SK-N-SH (cell line): ENCODE measurements at regions of chr1 and their contacts with region 1.

Region 1: DNA sequence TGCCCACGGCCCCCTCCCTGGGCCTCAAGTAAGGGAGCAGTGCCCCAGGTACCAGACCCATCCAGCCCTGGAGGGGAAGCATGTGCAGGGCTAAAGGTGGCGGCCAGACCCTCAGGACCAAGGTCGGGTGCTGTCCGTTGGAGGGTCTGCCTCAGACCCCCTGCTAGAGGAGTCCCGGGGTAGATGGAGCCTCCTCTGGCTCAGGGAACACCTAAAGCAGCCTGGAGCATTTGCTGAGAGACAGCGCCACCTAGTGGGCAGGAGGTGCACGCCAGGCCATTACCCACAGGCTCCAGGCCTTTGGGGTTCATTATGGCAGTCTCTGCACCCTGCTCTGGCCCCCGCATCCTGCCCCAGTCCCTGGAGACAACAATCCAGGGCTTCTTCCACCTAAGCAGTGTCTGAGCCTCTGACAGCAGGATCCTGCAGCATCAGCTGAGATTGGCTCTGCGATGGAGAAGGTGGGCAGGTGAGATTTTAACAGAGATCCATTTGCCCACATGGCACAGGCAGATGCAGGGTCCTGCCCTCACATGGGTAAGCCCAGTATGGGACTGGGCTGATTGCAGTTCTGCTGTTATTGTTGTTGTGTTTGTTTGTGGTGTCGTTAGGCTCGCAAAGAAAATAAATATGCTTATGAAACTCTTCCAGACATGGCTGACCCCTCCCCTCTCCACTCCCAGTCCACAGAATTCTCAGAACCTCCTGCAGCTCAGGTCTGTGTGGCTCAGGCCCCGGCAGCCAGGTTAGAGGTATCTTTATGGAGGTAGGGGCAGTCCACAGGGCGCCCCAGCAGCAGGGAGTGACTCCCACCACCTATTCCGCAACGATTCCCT is 42.4 kb downstream of the CTNNBIP1 start:
- DNase-seq: peak; percentile 91
- H3K4me3 ChIP-seq: no peak overlapping the region
- H3K27ac ChIP-seq: no peak overlapping the region
- H3K4me1 ChIP-seq: peaks cover 0 to 4% of the 10 kb centered on the region in 2 experiments; a peak in 1 of 4 replicates
- H3K27me3 ChIP-seq: no peaks in the 10 kb centered on the region
- CTCF ChIP-seq: peak; percentile 94
- EP300 ChIP-seq: no peak
- RAD21 ChIP-seq: peak; percentile 97

Region 2: DNA sequence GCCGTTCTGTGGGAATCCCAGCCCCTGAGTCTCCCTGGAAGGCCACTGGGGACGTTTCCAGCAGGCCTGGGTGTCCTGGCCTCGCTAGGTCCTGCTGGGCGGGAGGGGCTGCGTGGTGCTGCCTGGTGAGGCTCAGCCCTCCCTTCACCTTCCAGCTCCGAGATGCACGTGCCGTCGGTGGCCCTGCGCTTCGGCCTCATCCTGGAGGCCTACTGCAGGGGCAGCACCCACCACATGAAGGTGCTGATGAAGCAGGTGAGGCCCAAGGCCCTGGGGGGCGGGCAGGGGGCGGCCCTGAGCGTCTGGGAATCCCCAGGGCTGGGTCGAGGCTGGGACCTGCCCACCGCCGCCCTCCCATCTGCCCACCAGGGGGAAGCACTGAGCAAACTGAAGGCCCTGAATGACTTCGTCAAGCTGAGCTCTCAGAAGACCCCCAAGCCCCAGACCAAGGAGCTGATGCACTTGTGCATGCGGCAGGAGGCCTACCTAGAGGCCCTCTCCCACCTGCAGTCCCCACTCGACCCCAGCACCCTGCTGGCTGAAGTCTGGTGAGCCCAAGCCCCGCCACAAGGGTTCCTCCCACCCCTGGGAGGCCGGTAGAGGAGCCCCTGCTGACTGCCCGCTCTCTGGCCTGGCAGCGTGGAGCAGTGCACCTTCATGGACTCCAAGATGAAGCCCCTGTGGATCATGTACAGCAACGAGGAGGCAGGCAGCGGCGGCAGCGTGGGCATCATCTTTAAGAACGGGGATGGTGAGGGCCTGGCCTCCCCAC is 145.8 kb before region 1 on chr1:
- CTCF ChIA-PET with region 1: interaction called, 13 read pairs
- POLR2A ChIA-PET with region 1: no interaction called
- DNase-seq: peak; percentile 87
- H3K4me3 ChIP-seq: no peak overlapping the region; a peak in 1 of 4 replicates
- H3K27ac ChIP-seq: no peak overlapping the region
- H3K4me1 ChIP-seq: peaks cover 2 to 9% of the 10 kb centered on the region in 2 experiments; a peak in 2 of 4 replicates
- H3K27me3 ChIP-seq: no peaks in the 10 kb centered on the region
- CTCF ChIP-seq: peak; percentile 62
- EP300 ChIP-seq: no peak
- RAD21 ChIP-seq: no peak

Region 3: DNA sequence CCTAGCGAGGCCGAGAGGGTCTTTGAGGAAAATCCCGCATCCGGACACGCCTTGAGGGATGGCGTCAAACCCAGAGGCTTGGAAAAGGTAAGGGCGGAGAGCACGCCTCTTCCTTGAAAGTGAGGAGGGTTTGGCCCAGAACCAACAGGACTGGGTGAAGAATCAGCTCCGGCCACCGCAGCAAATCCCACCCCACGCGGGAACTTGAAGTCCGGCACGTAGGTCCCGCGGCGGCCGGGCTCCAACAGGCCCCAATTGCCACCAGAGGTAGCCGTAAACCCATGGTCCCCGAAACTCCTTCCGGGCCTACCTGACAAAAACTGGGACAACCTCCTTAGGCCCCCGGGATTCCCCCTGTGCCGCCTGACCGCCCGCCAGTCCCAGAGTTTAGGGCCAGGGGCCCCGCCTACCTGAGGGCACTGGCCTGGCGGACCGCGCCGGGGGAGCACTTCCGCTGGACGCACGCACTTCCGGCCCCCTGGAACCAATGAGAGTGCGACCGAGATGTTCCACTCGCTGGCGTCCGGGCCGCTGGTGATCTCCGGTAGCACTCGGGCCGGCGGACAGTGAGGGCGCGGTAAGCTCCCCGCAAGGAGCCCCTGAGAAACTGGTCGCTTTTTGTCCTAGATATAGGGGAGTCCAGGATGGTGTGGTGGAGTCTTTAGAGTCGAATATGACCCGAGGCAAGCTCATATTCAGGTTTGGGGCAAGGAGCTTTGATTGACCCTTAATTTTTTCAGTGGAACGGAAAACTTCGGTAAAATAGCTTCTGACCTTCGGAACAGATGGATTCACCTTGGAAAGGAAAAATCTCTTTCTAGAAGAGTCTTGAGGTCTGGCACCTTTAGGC is 75.5 kb after region 1 on chr1 and contains the starts of genes LZIC and NMNAT1:
- CTCF ChIA-PET with region 1: interaction called, 56 read pairs
- POLR2A ChIA-PET with region 1: no interaction called
- DNase-seq: peak; percentile 95
- H3K4me3 ChIP-seq: peak within 1 kb of the TSS; percentile 72 to 88
- H3K27ac ChIP-seq: peak within 1 kb of the TSS; percentile 78 to 81
- H3K4me1 ChIP-seq: peaks cover 3 to 4% of the 10 kb centered on the region in 2 experiments; a peak in 1 of 4 replicates
- H3K27me3 ChIP-seq: no peaks in the 10 kb centered on the region
- CTCF ChIP-seq: no peak
- EP300 ChIP-seq: no peak
- RAD21 ChIP-seq: no peak
- polyA plus RNA-seq, gene LZIC: 9.6 and 10.2 TPM in 2 replicates
- polyA plus RNA-seq, gene NMNAT1: 7.0 and 8.7 TPM in 2 replicates

Region 4: GRCh38 chr1:10830961-10831669 is 963.5 kb after region 1 on chr1:
- CTCF ChIA-PET with region 1: no interaction called
- POLR2A ChIA-PET with region 1: no interaction called
- DNase-seq: no peak
- H3K4me3 ChIP-seq: no peak overlapping the region
- H3K27ac ChIP-seq: no peak overlapping the region
- H3K4me1 ChIP-seq: no peaks in the 10 kb centered on the region; a peak in 1 of 4 replicates
- H3K27me3 ChIP-seq: no peaks in the 10 kb centered on the region
- CTCF ChIP-seq: no peak
- EP300 ChIP-seq: no peak
- RAD21 ChIP-seq: no peak